ENCODE measurements at regions of chr16 and their contacts with region 1.

Region 1: DNA sequence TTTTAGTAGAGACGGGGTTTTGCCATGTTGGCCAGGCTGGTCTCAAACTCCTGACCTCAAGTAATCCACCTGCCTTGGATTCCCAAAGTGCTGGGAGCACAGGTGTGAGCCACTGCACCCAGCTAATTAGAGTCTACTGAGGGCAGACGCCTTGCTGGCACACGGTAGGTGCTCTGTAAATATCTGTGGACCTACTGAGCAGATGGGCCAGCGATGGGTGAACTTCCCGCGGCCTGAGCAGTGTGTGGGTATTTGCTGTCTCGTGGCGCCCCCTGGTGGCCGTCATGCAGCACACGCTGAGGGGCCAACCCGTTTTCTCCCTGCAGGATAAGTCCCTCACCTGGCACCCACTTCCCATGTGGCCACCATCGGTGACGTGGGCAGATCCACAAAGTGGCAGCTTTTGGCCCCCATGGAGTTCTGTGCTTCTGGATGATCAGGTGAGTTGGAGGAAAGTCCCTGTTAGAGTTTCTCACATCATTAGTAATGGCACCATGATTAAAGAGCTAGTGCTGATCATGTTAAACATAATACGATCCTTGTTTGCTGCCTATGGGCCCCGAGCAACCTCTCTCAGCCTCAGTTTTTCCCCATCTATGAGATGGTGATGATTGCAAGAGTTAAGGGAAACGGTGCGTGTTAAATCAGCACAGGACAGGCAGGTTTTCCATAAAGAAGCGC is 40.7 kb downstream of the ZDHHC7 start:
- DNase-seq: peak; percentile 85

Region 2: GRCh38 chr16:84925092-84925772 is 45.4 kb before region 1 on chr16:
- CTCF ChIA-PET with region 1: interaction called, 22 read pairs
- POLR2A ChIA-PET with region 1: no interaction called
- DNase-seq: peak; percentile 77

Region 3: DNA sequence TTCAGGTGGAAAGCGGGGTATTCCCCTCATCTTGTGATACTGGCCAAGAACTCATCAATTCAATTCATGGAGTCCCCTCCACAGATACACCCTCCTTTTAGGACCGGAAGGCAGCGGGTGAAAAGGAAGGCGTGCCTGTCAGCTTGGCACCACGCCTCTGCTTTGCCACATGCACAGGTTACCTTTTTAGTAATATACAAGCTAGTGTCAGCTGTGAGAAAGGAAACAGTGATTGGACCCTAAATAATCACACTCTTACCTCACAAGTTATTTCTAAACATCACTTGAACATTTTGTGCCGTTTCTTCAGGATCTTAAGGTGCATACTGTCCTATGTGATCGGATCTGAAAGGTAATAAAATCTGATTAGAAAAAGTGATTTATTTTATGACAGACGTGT is 25.1 kb after region 1 on chr16:
- CTCF ChIA-PET with region 1: no interaction called
- POLR2A ChIA-PET with region 1: no interaction called
- DNase-seq: no peak

Region 4: DNA sequence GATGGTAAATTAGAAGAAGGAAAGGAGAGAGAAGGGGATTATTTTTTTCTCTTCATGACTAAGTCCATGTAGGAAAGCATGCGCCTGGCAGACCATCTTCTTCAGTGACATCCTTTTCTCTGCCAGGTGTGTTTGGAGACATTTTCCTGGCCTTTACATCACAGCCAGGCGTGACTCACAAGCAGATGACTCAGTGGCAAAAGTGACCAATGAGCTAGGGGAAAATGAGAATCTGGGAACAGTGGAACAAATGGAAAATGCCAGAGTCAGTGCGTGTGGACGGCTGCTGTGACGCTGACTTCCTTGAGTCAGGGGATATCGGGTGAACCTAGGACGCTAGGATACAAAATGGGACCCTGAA is 66.4 kb after region 1 on chr16:
- CTCF ChIA-PET with region 1: no interaction called
- POLR2A ChIA-PET with region 1: no interaction called
- DNase-seq: no peak